ENCODE measurements at regions of chr1 and their contacts with region 1.

Region 1: DNA sequence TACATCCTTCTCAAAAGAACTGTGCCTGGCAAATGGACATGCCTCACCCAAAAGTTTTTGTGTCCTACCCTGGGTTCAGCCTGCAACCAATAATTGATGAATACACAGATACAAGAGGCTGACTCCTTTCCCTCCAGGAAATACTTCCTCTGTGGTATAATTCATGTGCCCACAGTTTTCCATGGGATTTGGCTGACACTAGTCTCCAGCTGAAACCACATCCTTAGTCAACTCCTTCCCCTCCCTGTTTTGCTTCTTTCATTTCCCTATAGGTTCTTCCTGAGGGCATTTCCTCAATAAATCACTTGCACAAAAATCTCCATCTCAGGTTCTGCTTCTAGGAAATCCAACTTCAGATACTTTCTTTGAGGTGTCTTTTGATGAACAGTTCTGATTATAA is 436.6 kb upstream of the C1orf87 start:
- DNase-seq: peak; percentile 89
- H3K4me3 ChIP-seq: no peak overlapping the region
- H3K27ac ChIP-seq: peak overlapping the region; percentile 13
- H3K4me1 ChIP-seq: peaks cover 28% of the 10 kb centered on the region
- H3K27me3 ChIP-seq: no peaks in the 10 kb centered on the region
- CTCF ChIP-seq: no peak
- POLR2A ChIP-seq: peak; percentile 79

Region 2: GRCh38 chr1:60470246-60470645 is 39.9 kb before region 1 on chr1:
- CTCF ChIA-PET with region 1: no interaction called
- POLR2A ChIA-PET with region 1: no interaction called
- dilution Hi-C with region 1: no loop called
- intact Hi-C with region 1: loop called (anchors 1 kb)
- DNase-seq: peak; percentile 66
- H3K4me3 ChIP-seq: no peak overlapping the region
- H3K27ac ChIP-seq: peak overlapping the region; percentile 82
- H3K4me1 ChIP-seq: peaks cover 27% of the 10 kb centered on the region
- H3K27me3 ChIP-seq: no peaks in the 10 kb centered on the region
- CTCF ChIP-seq: no peak
- POLR2A ChIP-seq: no peak

Region 3: DNA sequence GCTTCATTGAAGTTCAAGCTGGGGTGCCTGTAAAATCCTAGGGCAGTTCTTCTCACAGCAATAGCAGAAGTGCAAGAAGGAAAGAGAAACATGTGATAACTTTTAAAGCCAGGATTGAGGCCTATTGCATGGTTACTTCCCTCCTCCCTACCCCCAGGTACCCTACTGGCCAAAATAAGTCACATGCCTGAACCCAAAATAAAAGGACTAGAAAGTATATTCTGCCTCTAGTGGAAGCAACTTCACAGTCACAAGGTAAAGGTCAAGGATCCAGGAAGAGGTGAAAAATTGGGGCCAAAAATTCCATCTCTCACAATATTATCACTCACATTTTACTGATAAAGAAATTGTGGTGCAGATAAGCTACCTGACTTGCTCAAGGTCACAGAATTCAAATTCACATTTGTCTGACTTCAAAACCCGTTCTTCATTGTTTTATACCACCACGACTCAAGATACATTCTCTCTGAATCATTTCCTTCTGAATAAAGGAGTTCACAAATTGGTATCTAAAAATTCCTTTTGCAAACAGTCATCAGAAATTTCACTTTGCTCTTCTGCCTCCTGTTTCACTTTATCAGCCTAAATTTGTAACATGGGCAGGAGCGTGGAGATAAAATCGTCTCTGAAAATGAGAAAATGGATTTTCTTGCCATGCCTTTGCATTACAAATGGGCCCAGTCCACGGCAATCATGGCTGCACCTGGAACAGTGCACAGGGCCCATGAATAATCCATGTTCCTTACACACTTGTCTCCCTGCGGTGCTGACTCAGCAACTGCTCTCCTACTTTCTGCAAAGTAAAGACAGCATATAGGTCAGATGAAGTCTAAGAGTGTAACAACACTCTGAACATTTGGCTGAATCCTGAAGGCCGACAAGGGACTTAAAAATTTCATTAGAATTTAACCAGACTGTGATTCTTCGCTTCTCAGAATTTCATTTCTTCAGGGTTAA is 86.9 kb after region 1 on chr1:
- CTCF ChIA-PET with region 1: no interaction called
- POLR2A ChIA-PET with region 1: no interaction called
- dilution Hi-C with region 1: no loop called
- intact Hi-C with region 1: loop called (anchors 1 kb)
- DNase-seq: peak; percentile 57
- H3K4me3 ChIP-seq: no peak overlapping the region
- H3K27ac ChIP-seq: peak overlapping the region; percentile 61
- H3K4me1 ChIP-seq: peaks cover 22% of the 10 kb centered on the region
- H3K27me3 ChIP-seq: no peaks in the 10 kb centered on the region
- CTCF ChIP-seq: peak in 1 of 2 donors; percentile 3
- POLR2A ChIP-seq: no peak